Gastrocnemius medialis (tissue), 4 donors: ENCODE measurements at regions of chr15 and their contacts with region 1.

Region 1: GRCh38 chr15:61702224-61703020 is 357.8 kb downstream of the VPS13C start:
- DNase-seq: peak; percentile 83 to 95
- ATAC-seq: peak; percentile 89 to 90
- H3K4me3 ChIP-seq: no peak overlapping the region
- H3K27ac ChIP-seq: peak overlapping the region; percentile 59 to 93 (median 77)
- H3K4me1 ChIP-seq: peaks cover 12 to 61% of the 10 kb centered on the region in 2 donors
- H3K27me3 ChIP-seq: no peaks in the 10 kb centered on the region
- CTCF ChIP-seq: peak in 2 of 5 experiments; percentile 13 to 32
- POLR2A ChIP-seq: peak in 1 of 2 donors; percentile 25

Region 2: DNA sequence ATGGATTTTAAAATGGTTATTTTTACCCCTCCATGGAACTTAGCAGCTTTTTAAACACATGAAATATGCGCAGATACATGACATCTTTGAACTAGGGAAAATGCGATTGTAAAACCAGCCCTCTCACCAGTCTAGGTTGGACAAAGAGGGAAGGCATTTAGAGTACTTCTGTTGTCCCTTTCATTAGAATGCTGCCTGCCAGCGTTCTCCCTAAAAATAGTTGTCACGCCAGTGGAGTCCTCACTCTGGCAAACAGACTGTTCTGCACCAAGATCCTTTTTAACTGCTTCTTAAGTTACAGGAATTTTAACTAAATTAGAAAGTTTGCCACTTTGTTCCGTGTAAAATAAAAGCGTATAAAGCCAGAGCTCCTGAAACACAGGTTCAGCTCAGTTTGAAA is 62.6 kb after region 1 on chr15:
- in situ Hi-C with region 1: no loop called
- intact Hi-C with region 1: loop called (anchors 5 kb)
- DNase-seq: peak in 1 of 2 donors; percentile 28
- ATAC-seq: peak; percentile 45 to 46
- H3K4me3 ChIP-seq: peak overlapping the region in 2 of 4 donors; percentile 25 to 29
- H3K27ac ChIP-seq: peak overlapping the region; percentile 23 to 87 (median 49)
- H3K4me1 ChIP-seq: peaks cover 19 to 64% of the 10 kb centered on the region in 2 donors
- H3K27me3 ChIP-seq: no peaks in the 10 kb centered on the region
- CTCF ChIP-seq: no peak
- POLR2A ChIP-seq: no peak

Region 3: GRCh38 chr15:61824291-61824690 is 121.9 kb after region 1 on chr15:
- in situ Hi-C with region 1: no loop called
- intact Hi-C with region 1: no loop called
- DNase-seq: no peak
- ATAC-seq: no peak
- H3K4me3 ChIP-seq: no peak overlapping the region
- H3K27ac ChIP-seq: no peak overlapping the region
- H3K4me1 ChIP-seq: no peaks in the 10 kb centered on the region
- H3K27me3 ChIP-seq: no peaks in the 10 kb centered on the region
- CTCF ChIP-seq: no peak
- POLR2A ChIP-seq: no peak